SK-N-SH (cell line): ENCODE measurements at regions of chr2 and their contacts with region 1.

Region 1: DNA sequence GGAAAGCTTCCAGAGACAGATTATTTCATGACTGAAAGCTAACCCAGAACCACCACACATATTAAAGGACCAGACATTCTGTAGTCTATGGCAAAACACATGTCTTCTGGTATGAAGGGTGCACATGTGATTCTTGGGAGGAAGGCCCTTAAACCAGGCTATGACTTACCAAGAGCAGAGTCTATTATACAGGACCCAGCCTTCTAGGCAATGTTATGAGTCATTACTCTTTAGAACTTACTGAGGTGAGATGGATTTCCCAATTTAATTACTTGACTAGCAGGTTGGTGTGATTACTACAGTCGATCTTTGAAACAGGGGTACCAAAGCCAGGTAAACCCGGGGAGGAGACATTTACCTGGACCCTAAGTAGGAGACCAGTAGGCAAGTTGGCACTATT is 350.8 kb downstream of the TRIB2 start:
- DNase-seq: no peak
- H3K4me3 ChIP-seq: no peak overlapping the region
- H3K27ac ChIP-seq: no peak overlapping the region
- H3K4me1 ChIP-seq: no peaks in the 10 kb centered on the region; a peak in 1 of 4 replicates
- H3K27me3 ChIP-seq: no peaks in the 10 kb centered on the region
- CTCF ChIP-seq: no peak
- EP300 ChIP-seq: no peak
- RAD21 ChIP-seq: no peak

Region 2: GRCh38 chr2:13056259-13056843 is 11.2 kb before region 1 on chr2:
- CTCF ChIA-PET with region 1: interaction called, 15 read pairs
- POLR2A ChIA-PET with region 1: no interaction called
- DNase-seq: peak; percentile 41
- H3K4me3 ChIP-seq: no peak overlapping the region
- H3K27ac ChIP-seq: no peak overlapping the region
- H3K4me1 ChIP-seq: no peaks in the 10 kb centered on the region
- H3K27me3 ChIP-seq: no peaks in the 10 kb centered on the region
- CTCF ChIP-seq: peak; percentile 76
- EP300 ChIP-seq: no peak
- RAD21 ChIP-seq: peak; percentile 77

Region 3: GRCh38 chr2:13113013-13113412 is 45.5 kb after region 1 on chr2:
- CTCF ChIA-PET with region 1: no interaction called
- POLR2A ChIA-PET with region 1: no interaction called
- DNase-seq: no peak
- H3K4me3 ChIP-seq: no peak overlapping the region
- H3K27ac ChIP-seq: no peak overlapping the region
- H3K4me1 ChIP-seq: no peaks in the 10 kb centered on the region; a peak in 1 of 4 replicates
- H3K27me3 ChIP-seq: no peaks in the 10 kb centered on the region
- CTCF ChIP-seq: no peak
- EP300 ChIP-seq: no peak
- RAD21 ChIP-seq: no peak